Activated B cell treated with CpG ODN at 0.5 μM for 24 hours (primary cell): ENCODE measurements at regions of chr15 and their contacts with region 1.

Region 1: GRCh38 chr15:41416742-41417406 is at the start of gene RTF1:
- DNase-seq: peak; percentile 100
- ATAC-seq: peak; percentile 96
- H3K4me3 Mint-ChIP-seq: peak within 1 kb of the TSS; percentile 95
- H3K27ac Mint-ChIP-seq: peak within 1 kb of the TSS; percentile 92
- H3K4me1 Mint-ChIP-seq: peaks cover 43% of the 10 kb centered on the region
- H3K27me3 Mint-ChIP-seq: no peaks in the 10 kb centered on the region
- CTCF ChIP-seq: no peak
- total RNA-seq, gene RTF1: 37.2 and 38.0 TPM in 2 replicates

Region 2: GRCh38 chr15:41283653-41284426 is 133.0 kb before region 1 on chr15:
- CTCF ChIA-PET with region 1: no interaction called
- POLR2A ChIA-PET with region 1: no interaction called
- intact Hi-C with region 1: loop called (anchors 5 kb)
- DNase-seq: peak; percentile 94
- ATAC-seq: peak; percentile 98
- H3K4me3 Mint-ChIP-seq: peak overlapping the region; percentile 93
- H3K27ac Mint-ChIP-seq: peak overlapping the region; percentile 94
- H3K4me1 Mint-ChIP-seq: peaks cover 42% of the 10 kb centered on the region
- H3K27me3 Mint-ChIP-seq: no peaks in the 10 kb centered on the region
- CTCF ChIP-seq: no peak